Posterior cingulate gyrus (tissue), 11 donors: ENCODE measurements at regions of chr3 and their contacts with region 1.

Region 1: DNA sequence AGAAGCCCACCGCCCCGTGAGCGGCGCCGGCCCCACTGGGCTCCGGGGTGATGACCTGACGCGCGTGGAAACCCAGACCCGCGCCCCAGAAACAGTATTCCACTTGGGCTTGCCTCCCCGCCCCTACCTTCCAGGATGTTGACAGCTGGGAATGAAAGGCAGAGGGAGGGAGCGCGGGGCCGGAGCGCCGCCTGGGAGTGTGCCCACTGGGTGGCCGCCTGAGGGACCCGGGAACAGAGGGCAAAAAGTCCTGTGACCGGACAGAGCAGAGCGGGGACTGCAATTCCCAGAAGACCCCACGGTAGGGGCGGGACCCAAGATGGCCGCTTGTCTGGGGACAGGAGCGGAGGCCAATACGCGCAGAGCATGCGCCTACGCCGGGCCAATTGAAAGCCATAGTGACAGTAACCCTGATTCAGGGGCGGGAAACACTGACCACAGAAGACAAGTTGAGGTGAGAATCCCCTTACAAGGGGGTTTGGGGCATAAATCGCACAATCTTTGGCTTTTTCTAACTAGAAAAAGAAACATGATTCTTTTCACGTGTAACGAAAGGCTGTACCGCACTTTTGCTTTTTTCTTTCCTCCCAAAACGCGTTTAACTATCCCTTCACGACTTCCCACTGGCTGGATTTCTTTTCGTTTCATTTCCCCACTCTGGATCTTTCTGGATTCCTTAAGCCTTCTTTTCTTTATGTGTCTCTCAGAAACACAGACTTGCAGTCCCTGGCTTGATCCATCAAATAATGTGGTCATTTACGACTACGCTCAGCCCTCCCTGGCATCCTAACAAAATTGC is at the start of gene FHIT:
- DNase-seq: peak; percentile 94 to 99 (median 96)

Region 2: DNA sequence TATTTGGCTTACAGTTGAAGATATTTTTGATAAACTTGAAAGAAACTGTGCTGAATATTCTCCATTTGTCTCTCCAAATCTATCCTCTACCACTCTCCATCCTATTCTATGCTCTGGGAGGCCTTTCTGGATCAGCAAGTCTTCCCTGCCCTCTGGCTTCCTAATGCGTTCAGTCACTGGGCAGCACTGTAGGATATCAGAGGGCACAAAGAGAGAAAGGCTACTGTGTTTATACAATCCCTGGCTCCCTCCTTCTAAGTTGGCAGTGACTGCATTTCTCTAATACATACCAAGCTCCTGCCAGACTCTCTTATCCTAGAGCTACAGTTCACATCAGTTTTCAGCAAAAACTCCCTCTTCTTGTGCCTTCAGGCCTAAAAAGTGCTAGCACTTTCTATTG is 102.0 kb after region 1 on chr3:
- intact Hi-C with region 1: loop called (anchors 2 kb)
- DNase-seq: peak in 6 of 10 donors; percentile 22 to 88 (median 36)

Region 3: DNA sequence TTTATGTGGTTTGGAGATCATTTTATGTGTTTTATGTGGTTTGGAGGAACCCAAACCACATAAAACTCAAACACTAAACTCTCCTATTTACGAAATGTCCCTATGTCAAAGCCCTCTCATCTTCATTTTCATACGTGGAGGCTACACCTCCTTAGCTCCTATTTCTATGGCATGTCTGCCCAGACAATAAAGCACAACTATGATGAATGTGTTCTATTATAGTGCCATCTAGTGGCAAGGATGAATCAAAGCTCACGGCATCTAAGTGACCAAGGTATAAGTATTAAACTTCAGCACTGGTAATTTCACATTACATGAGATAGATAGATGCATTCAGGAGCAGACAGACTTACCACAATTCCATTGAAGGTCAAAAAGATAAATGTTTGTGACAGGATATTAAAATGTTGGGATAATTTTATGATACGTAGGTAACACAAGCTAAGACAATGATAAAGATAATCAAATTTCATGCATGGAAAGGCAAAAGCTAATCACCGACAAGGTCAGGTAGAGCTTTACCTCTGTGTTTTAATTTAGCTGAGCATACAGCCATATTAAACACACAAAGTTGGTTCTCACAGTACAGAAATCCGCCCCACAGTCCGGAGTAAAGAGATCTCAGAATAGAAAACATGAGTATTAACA is 130.5 kb after region 1 on chr3:
- intact Hi-C with region 1: no loop called
- DNase-seq: no peak